SK-N-SH (cell line): ENCODE measurements at regions of chr17 and their contacts with region 1.

Region 1: GRCh38 chr17:6913608-6914443 is 82.0 kb upstream of the ALOX12 start:
- DNase-seq: peak; percentile 77
- H3K4me3 ChIP-seq: peak overlapping the region; percentile 43 to 60
- H3K27ac ChIP-seq: no peak overlapping the region
- H3K4me1 ChIP-seq: peaks cover 0 to 5% of the 10 kb centered on the region in 2 experiments; a peak in 1 of 4 replicates
- H3K27me3 ChIP-seq: no peaks in the 10 kb centered on the region
- CTCF ChIP-seq: peak; percentile 90
- EP300 ChIP-seq: no peak
- RAD21 ChIP-seq: peak; percentile 91

Region 2: DNA sequence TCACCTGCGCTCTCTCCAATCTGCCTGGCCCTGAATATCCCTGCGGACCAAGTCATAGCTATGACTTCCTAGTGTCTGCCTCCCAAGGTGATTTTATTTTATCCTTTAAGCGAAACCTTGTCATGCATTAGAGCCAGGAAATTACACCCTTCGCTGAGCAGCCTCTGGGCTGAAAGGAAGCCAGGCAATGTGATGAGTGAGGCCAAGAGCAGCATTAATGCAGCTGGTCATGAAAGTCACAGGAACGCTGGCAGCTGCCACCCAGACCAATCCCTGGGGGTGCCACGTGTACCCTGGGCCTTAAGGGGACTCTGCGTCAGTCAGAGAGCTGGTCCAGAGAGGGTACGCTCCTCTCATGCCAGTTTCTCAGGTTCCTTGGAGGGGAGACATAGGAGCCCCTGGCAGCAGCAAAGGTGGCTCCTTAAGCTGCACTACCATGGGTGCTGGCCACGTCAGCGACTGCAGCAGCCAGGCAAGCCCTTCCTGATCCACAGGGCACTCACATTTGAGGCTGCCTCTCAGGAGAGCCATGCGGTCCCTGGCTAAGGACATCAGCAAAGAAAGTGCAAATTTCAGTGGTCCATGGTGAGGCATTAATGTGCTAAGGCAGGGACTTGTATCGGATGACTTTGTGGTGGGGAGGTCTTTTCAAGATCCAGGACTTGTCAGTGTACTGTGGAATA is 886.3 kb before region 1 on chr17:
- CTCF ChIA-PET with region 1: no interaction called
- POLR2A ChIA-PET with region 1: no interaction called
- DNase-seq: no peak
- H3K4me3 ChIP-seq: no peak overlapping the region
- H3K27ac ChIP-seq: no peak overlapping the region
- H3K4me1 ChIP-seq: no peaks in the 10 kb centered on the region
- H3K27me3 ChIP-seq: peaks cover 17% of the 10 kb centered on the region; the same call in 1 of the 2 replicates
- CTCF ChIP-seq: no peak
- EP300 ChIP-seq: no peak
- RAD21 ChIP-seq: no peak

Region 3: GRCh38 chr17:6780886-6781285 is 132.9 kb before region 1 on chr17:
- CTCF ChIA-PET with region 1: no interaction called
- POLR2A ChIA-PET with region 1: no interaction called
- DNase-seq: no peak
- H3K4me3 ChIP-seq: no peak overlapping the region
- H3K27ac ChIP-seq: no peak overlapping the region
- H3K4me1 ChIP-seq: no peaks in the 10 kb centered on the region
- H3K27me3 ChIP-seq: peaks cover 60% of the 10 kb centered on the region
- CTCF ChIP-seq: no peak
- EP300 ChIP-seq: no peak
- RAD21 ChIP-seq: no peak

Region 4: DNA sequence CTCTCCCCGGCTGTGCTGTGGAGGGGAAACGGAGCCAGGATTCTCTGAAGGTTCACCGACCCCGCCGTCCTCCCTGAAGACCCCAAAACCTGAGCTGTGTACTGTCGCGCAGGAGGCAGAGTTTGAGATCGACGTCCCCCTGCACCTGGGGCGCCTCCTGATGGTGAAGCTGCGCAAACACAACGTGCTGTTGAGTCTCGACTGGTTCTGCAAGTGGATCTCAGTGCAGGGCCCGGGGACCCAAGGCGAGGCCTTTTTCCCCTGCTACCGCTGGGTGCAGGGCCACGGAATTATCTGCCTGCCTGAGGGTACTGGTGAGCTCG is 19.7 kb before region 1 on chr17:
- CTCF ChIA-PET with region 1: interaction called, 15 read pairs
- POLR2A ChIA-PET with region 1: no interaction called
- DNase-seq: no peak
- H3K4me3 ChIP-seq: no peak overlapping the region
- H3K27ac ChIP-seq: no peak overlapping the region
- H3K4me1 ChIP-seq: no peaks in the 10 kb centered on the region
- H3K27me3 ChIP-seq: no peaks in the 10 kb centered on the region
- CTCF ChIP-seq: peak; percentile 31; the same call in 1 of the 2 replicates
- EP300 ChIP-seq: no peak
- RAD21 ChIP-seq: no peak

Region 5: DNA sequence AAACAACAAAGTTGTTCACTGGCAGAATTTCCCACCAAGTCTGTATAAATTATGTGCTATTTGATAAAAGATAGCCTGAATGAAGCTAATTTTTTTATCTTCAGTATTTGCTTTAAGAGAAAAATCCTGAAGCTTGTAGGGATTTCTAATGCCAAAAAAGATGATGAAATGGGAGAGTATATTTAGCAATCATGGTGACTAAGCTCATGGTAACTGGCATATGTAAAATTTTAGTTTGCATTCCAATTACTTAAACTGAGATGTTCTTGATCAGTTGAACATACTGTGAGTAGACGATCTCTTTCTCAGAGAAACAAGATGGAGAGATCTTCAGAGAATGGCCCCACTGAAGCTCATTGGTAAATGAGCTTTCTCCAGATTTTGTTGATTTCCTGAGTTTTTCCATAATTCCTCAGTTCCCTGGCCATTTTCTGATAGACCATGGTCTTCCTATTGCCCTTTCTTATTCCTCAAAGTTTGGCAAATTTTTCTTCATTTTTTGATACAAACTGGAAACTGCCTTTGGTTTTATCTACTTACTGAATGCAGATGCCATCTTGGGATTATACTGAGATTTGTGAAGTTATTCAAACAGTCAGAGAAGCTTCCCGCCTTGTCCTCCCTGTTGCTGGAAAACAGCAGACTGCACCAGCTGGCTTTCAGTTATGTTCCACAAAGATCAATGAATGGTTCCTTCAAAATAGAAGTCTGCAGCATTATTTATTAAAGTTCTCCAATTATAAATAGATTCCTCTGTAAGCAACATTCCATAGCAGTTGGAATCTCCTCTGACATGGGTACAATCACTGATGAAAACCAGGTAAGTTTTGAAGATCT is 13.7 kb after region 1 on chr17:
- CTCF ChIA-PET with region 1: interaction called, 17 read pairs
- POLR2A ChIA-PET with region 1: no interaction called
- DNase-seq: no peak
- H3K4me3 ChIP-seq: no peak overlapping the region
- H3K27ac ChIP-seq: peak overlapping the region in 1 of 2 experiments; percentile 78; a peak in 2 of 4 replicates
- H3K4me1 ChIP-seq: peaks cover 0 to 16% of the 10 kb centered on the region in 2 experiments; a peak in 1 of 4 replicates
- H3K27me3 ChIP-seq: no peaks in the 10 kb centered on the region
- CTCF ChIP-seq: no peak
- EP300 ChIP-seq: no peak
- RAD21 ChIP-seq: no peak

Region 6: DNA sequence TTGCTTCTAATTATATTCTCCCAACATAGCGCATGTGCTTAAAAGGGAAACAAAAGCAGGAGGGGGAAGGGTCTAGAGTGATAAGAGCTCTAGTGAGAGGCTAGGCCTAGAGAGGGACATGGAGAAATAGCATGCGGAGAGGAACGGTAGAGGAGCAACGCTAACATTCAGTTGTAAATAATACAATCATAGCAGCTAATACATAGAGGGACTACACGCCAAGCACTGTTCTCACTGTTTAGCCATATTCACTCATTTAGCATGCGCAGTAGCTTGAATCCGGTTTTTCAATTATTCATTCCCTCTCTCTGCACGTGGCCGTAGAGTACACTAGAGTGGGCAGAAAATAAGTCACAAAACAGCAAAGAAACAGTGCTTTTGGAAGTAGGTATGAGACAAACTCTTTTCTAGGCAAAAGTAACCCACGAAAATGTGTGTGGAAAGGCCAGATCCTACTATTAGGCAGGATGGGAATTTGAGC is 80.3 kb after region 1 on chr17:
- CTCF ChIA-PET with region 1: interaction called, 10 read pairs
- POLR2A ChIA-PET with region 1: no interaction called
- DNase-seq: no peak
- H3K4me3 ChIP-seq: no peak overlapping the region
- H3K27ac ChIP-seq: no peak overlapping the region
- H3K4me1 ChIP-seq: peaks cover 0 to 3% of the 10 kb centered on the region in 2 experiments; a peak in 1 of 4 replicates
- H3K27me3 ChIP-seq: no peaks in the 10 kb centered on the region
- CTCF ChIP-seq: no peak
- EP300 ChIP-seq: no peak
- RAD21 ChIP-seq: no peak

Region 7: GRCh38 chr17:7011942-7012254 is 98.1 kb after region 1 on chr17:
- CTCF ChIA-PET with region 1: interaction called, 72 read pairs
- POLR2A ChIA-PET with region 1: no interaction called
- DNase-seq: no peak
- H3K4me3 ChIP-seq: peak overlapping the region; percentile 78 to 85
- H3K27ac ChIP-seq: peak overlapping the region; percentile 95
- H3K4me1 ChIP-seq: peaks cover 12 to 26% of the 10 kb centered on the region in 2 experiments; a peak in 2 of 4 replicates
- H3K27me3 ChIP-seq: no peaks in the 10 kb centered on the region
- CTCF ChIP-seq: no peak
- EP300 ChIP-seq: no peak
- RAD21 ChIP-seq: no peak

Region 8: DNA sequence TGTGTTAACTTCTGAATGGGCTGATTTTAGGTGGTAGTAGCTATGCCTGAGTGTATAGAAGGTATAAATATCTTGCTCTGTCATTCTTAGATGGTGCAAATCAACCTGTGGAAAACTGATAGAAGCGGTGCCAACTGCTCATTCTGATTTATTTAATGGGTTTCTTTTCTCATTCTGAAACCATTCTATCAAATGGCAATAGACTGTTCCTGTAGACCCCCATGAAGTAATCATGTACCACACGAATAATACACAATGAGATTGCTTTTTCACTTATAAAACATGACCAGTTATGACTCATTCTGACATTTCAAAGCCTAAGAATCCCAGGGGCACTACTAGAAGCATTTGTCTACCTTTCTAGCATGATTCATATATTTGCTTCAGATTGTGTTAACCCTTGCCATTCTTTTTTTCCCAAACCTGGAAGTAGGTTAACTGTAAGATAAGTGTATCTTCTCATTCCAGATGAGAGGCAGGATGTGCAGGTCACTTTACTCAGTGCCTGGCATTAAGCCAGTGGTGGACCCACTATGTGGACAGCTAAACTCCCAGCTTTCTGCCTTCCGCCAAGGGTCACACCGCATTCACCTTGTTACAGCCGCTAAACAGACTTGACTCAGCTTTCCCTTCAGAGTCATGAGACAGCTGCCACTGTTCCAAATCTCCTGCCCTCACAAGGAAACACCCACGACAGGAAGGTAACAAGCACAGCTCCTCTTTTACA is 146.5 kb after region 1 on chr17:
- CTCF ChIA-PET with region 1: no interaction called
- POLR2A ChIA-PET with region 1: no interaction called
- DNase-seq: no peak
- H3K4me3 ChIP-seq: no peak overlapping the region
- H3K27ac ChIP-seq: no peak overlapping the region
- H3K4me1 ChIP-seq: peaks cover 0 to 9% of the 10 kb centered on the region in 2 experiments; a peak in 1 of 4 replicates
- H3K27me3 ChIP-seq: peaks cover 58% of the 10 kb centered on the region
- CTCF ChIP-seq: no peak
- EP300 ChIP-seq: no peak
- RAD21 ChIP-seq: no peak